Aorta (tissue), 5 donors: ENCODE measurements at regions of chr9 and their contacts with region 1.

Region 1: GRCh38 chr9:26656003-26656870 is 236.4 kb downstream of the CAAP1 start:
- DNase-seq: no peak
- ATAC-seq: no peak
- H3K4me3 ChIP-seq: peak overlapping the region in 1 of 2 donors; percentile 19
- H3K27ac ChIP-seq: no peak overlapping the region
- H3K4me1 ChIP-seq: no peaks in the 10 kb centered on the region
- H3K27me3 ChIP-seq: no peaks in the 10 kb centered on the region

Region 2: DNA sequence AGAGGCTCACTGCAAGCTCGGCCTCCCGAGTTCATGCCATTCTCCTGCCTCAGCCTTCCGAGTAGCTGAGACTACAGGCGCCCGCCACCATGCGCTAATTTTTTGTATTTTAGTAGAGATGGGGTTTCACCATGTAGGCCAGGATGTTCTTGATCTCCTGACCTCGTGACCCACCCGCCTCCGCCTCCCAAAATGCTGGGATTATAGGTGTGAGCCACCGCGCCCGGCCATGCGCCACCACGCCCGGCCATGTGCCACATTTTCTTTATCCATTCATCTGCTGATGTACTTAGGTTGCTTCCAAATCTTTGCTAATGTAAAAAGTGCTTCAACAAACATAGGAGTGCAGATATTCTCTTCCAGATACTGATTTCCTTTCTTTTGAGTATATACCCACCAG is 172.2 kb before region 1 on chr9:
- intact Hi-C with region 1: no loop called
- DNase-seq: no peak
- ATAC-seq: no peak
- H3K4me3 ChIP-seq: no peak overlapping the region
- H3K27ac ChIP-seq: no peak overlapping the region
- H3K4me1 ChIP-seq: no peaks in the 10 kb centered on the region
- H3K27me3 ChIP-seq: no peaks in the 10 kb centered on the region

Region 3: DNA sequence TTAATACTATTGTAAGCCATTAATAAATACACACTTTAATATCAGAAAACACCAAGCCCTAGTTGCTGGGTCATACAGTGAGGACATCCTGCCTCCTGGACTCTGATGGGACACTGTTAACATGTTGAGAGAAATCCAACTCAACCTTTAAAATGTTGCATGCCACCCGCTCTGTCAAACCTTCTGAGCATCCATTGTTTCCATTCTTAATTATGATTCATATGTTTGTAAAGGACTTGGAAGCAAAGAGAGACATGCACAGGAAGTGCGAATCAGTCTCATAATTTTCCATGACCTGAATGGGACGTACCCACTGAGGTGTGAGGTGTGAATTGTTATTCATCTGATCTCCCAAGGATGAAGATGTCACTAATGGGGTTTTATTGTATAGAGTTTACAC is 50.0 kb after region 1 on chr9:
- intact Hi-C with region 1: loop called in 1 of 2 experiments (anchors 10 kb)
- DNase-seq: no peak
- ATAC-seq: no peak
- H3K4me3 ChIP-seq: no peak overlapping the region
- H3K27ac ChIP-seq: no peak overlapping the region
- H3K4me1 ChIP-seq: no peaks in the 10 kb centered on the region
- H3K27me3 ChIP-seq: no peaks in the 10 kb centered on the region